ENCODE measurements at regions of chr19 and their contacts with region 1.

Region 1: GRCh38 chr19:47697863-47698609 is 15.2 kb upstream of the EHD2 start:
- DNase-seq: peak; percentile 79
- H3K4me3 ChIP-seq: no peak overlapping the region
- H3K27ac ChIP-seq: peak overlapping the region; percentile 49 to 82 (median 74)
- H3K4me1 ChIP-seq: peaks cover 4 to 6% (median 5%) of the 10 kb centered on the region in 4 donors
- H3K27me3 ChIP-seq: no peaks in the 10 kb centered on the region
- CTCF ChIP-seq: peak; percentile 96 to 99 (median 98)
- EP300 ChIP-seq: no peak
- POLR2A ChIP-seq: no peak

Region 2: GRCh38 chr19:47436712-47437401 is 261.2 kb before region 1 on chr19:
- in situ Hi-C with region 1: loop called in 2 of 4 experiments (anchors 5 to 10 kb)
- intact Hi-C with region 1: loop called (anchors 2 kb)
- DNase-seq: peak; percentile 85
- H3K4me3 ChIP-seq: no peak overlapping the region
- H3K27ac ChIP-seq: no peak overlapping the region
- H3K4me1 ChIP-seq: no peaks in the 10 kb centered on the region
- H3K27me3 ChIP-seq: peaks cover 57% of the 10 kb centered on the region
- CTCF ChIP-seq: peak; percentile 88 to 93 (median 90)
- EP300 ChIP-seq: no peak
- POLR2A ChIP-seq: no peak

Region 3: DNA sequence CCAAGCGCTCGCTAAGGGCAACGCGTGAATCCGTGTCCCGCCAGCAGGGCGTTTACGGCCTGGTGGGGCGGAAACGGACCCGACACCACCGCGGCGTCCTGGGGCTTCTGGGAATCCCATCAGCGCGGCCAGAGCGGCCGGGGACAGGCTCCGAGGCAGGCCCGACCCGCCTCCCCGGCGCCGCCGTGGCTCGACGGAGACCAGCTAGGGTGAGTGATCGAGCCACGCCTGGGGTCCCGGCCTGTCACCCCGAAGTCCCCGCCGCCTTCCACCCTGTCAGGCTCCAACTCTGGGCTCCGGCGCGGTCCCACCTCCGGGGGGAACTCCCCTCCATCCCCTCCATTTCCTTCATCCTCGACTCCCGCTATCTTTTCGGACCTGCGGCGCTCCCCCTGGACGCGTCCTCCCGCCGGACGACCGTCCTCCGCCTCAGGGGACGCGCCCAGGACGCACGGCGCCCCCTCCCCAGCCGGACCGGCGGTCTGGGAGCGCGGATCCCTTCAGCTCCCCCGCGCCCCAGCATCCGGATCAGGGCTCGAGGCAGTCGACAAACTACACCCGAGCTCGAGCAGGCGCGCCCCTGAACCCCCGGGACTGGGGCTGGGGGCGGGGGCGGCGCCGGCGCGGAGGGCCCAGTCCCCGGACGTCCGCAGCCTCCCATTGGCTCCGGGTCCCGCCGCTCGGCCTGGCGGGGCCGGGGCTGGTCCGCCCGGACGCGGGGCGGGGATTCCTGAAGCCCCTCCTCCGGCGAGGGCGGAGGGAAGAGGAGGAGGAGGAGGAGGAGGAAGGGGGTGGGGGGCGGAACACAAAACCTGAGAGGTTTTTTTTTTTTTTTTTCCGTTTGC is 89.7 kb before region 1 on chr19:
- in situ Hi-C with region 1: no loop called
- intact Hi-C with region 1: loop called (anchors 1 kb)
- DNase-seq: peak; percentile 97
- H3K4me3 ChIP-seq: peak overlapping the region; percentile 81 to 97 (median 88)
- H3K27ac ChIP-seq: peak overlapping the region; percentile 97 to 98 (median 98)
- H3K4me1 ChIP-seq: peaks cover 22 to 40% (median 25%) of the 10 kb centered on the region in 4 donors
- H3K27me3 ChIP-seq: no peaks in the 10 kb centered on the region
- CTCF ChIP-seq: peak; percentile 31 to 74 (median 47)
- EP300 ChIP-seq: no peak
- POLR2A ChIP-seq: peak; percentile 80